ENCODE measurements at regions of chr2 and their contacts with region 1.

Region 1: GRCh38 chr2:44044281-44044720 is 48.5 kb upstream of the LRPPRC start:
- DNase-seq: peak; percentile 91 to 95
- ATAC-seq: peak; percentile 94
- H3K4me3 ChIP-seq: no peak overlapping the region
- H3K27ac ChIP-seq: no peak overlapping the region
- H3K4me1 ChIP-seq: no peaks in the 10 kb centered on the region
- H3K27me3 ChIP-seq: no peaks in the 10 kb centered on the region

Region 2: DNA sequence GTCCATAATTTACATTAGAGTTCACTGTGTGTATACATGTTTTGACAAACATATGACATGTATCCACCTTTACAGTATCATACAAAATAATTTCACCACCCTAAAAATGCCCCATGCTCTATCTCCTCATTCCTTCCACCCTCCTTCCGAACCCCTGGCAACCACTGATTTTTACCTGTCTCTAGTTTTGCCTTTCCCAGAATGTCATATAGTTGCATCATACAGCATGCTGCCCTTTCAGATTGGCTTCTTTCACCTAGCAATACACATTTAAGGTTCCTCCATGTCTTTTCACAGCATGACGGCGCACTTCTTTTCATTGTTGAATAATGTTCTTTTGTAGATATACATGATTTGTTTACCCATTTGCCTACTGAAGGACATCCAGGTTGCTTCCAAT is 58.9 kb before region 1 on chr2:
- intact Hi-C with region 1: no loop called
- DNase-seq: no peak
- ATAC-seq: no peak
- H3K4me3 ChIP-seq: no peak overlapping the region
- H3K27ac ChIP-seq: no peak overlapping the region
- H3K4me1 ChIP-seq: no peaks in the 10 kb centered on the region
- H3K27me3 ChIP-seq: no peaks in the 10 kb centered on the region

Region 3: GRCh38 chr2:44120428-44120827 is 76.1 kb after region 1 on chr2:
- intact Hi-C with region 1: no loop called
- DNase-seq: no peak
- ATAC-seq: no peak
- H3K4me3 ChIP-seq: no peak overlapping the region
- H3K27ac ChIP-seq: no peak overlapping the region
- H3K4me1 ChIP-seq: no peaks in the 10 kb centered on the region
- H3K27me3 ChIP-seq: no peaks in the 10 kb centered on the region

Region 4: GRCh38 chr2:44184106-44184505 is 139.8 kb after region 1 on chr2:
- intact Hi-C with region 1: no loop called
- DNase-seq: no peak
- ATAC-seq: no peak
- H3K4me3 ChIP-seq: no peak overlapping the region
- H3K27ac ChIP-seq: no peak overlapping the region
- H3K4me1 ChIP-seq: peaks cover 4 to 9% of the 10 kb centered on the region in 2 donors
- H3K27me3 ChIP-seq: no peaks in the 10 kb centered on the region

Region 5: GRCh38 chr2:44479122-44479887 is 435.0 kb after region 1 on chr2:
- intact Hi-C with region 1: loop called in 1 of 2 experiments (anchors 5 kb)
- DNase-seq: no peak
- ATAC-seq: peak; percentile 87
- H3K4me3 ChIP-seq: no peak overlapping the region
- H3K27ac ChIP-seq: no peak overlapping the region
- H3K4me1 ChIP-seq: no peaks in the 10 kb centered on the region
- H3K27me3 ChIP-seq: no peaks in the 10 kb centered on the region

Region 6: DNA sequence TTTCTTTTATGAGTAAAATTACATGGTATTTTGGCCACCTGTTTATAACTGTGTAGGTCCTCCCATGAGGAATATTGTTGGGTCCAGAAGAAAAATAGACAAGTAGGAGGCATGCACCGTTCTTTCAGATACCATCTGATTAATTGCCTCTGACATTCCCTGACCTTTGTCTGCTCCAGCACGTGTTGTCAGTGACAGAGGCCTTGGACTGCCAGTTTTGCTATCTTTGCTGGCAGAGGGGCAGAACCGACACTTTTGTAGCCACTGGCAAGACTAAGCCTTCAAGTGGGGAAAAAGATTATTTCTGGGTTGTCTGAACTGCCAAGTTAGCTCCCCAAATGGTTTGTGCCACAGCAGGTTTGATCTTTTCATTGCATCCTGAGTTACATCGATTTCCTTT is 594.3 kb after region 1 on chr2:
- intact Hi-C with region 1: no loop called
- DNase-seq: no peak
- ATAC-seq: no peak
- H3K4me3 ChIP-seq: no peak overlapping the region
- H3K27ac ChIP-seq: no peak overlapping the region
- H3K4me1 ChIP-seq: no peaks in the 10 kb centered on the region
- H3K27me3 ChIP-seq: peaks cover 0 to 1% of the 10 kb centered on the region in 2 donors

Measured in aorta (tissue), 5 donors.